CD8-positive, alpha-beta T cell (primary cell): ENCODE measurements at regions of chr3 and their contacts with region 1.

Region 1: DNA sequence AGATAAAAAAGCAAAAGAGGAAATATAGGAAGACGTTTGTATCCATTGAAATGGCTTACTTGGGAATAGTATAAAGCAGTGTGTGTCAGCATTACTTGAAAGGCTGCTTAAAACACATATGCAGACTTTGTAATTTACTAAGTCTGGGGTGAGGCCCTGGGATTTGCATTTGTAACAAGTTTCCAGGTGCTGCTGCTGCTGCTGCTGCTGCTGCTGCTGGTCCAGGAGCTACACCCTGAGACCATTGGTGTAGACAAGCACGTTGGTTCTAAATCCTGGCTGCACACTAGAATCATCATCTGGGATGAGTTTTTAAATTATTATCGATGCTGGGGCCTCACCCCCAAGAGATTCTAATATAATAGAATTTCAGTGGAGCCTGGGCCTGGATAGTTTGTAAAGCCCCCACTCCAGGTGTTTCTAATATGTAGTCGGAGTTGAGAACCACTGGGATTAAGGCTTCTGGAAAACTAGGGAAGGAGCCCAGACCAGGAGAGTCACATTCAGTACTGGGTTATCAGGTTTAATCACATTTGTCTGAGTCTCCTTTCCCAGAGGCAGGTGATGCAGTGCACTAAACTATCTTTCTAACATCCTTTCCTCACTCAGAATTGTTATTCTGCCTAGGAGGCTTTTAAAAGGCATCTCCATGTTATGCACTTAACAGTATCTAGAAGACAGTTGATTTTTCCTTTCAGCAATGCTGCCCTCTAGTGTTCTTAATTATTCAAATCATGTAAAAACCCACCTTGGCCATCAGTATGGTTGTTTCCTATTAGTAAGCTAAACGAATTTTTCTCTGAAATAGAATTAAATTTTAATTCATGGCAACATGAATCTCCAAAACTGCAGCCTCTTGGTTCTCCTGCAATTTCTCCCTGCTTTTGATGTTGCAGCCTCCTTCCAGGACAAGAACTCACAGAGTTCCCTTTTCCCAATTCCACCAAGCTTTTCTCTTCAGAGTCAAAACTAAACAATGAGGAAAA is 45.4 kb downstream of the SSR3 start:
- DNase-seq: peak in 2 of 9 experiments; percentile 61 to 72
- ATAC-seq: peak; percentile 86
- H3K4me3 ChIP-seq: no peak overlapping the region
- H3K4me3 Mint-ChIP-seq: no peak overlapping the region
- H3K27ac ChIP-seq: no peak overlapping the region
- H3K27ac Mint-ChIP-seq: no peak overlapping the region
- H3K4me1 ChIP-seq: no peaks in the 10 kb centered on the region
- H3K4me1 Mint-ChIP-seq: no peaks in the 10 kb centered on the region
- H3K27me3 ChIP-seq: no peaks in the 10 kb centered on the region
- H3K27me3 Mint-ChIP-seq: peaks cover 15% of the 10 kb centered on the region
- CTCF ChIP-seq: peak; percentile 69

Region 2: GRCh38 chr3:156040041-156040440 is 469.4 kb before region 1 on chr3:
- CTCF ChIA-PET with region 1: no interaction called
- POLR2A ChIA-PET with region 1: no interaction called
- intact Hi-C with region 1: loop called in 1 of 2 experiments (anchors 5 kb)
- DNase-seq: no peak
- ATAC-seq: no peak
- H3K4me3 ChIP-seq: no peak overlapping the region
- H3K4me3 Mint-ChIP-seq: no peak overlapping the region
- H3K27ac ChIP-seq: no peak overlapping the region
- H3K27ac Mint-ChIP-seq: no peak overlapping the region
- H3K4me1 ChIP-seq: no peaks in the 10 kb centered on the region
- H3K4me1 Mint-ChIP-seq: peaks cover 2% of the 10 kb centered on the region
- H3K27me3 ChIP-seq: no peaks in the 10 kb centered on the region
- H3K27me3 Mint-ChIP-seq: peaks cover 5% of the 10 kb centered on the region
- CTCF ChIP-seq: no peak

Region 3: GRCh38 chr3:156382458-156383346 is 126.8 kb before region 1 on chr3:
- CTCF ChIA-PET with region 1: interaction called, 4 read pairs
- POLR2A ChIA-PET with region 1: no interaction called
- intact Hi-C with region 1: loop called in 1 of 2 experiments (anchors 5 kb)
- DNase-seq: peak in 3 of 9 experiments; percentile 12 to 24 (median 13)
- ATAC-seq: no peak
- H3K4me3 ChIP-seq: no peak overlapping the region
- H3K4me3 Mint-ChIP-seq: no peak overlapping the region
- H3K27ac ChIP-seq: no peak overlapping the region
- H3K27ac Mint-ChIP-seq: no peak overlapping the region
- H3K4me1 ChIP-seq: no peaks in the 10 kb centered on the region
- H3K4me1 Mint-ChIP-seq: no peaks in the 10 kb centered on the region
- H3K27me3 ChIP-seq: no peaks in the 10 kb centered on the region
- H3K27me3 Mint-ChIP-seq: peaks cover 4% of the 10 kb centered on the region
- CTCF ChIP-seq: no peak

Region 4: GRCh38 chr3:156474560-156475389 is 34.7 kb before region 1 on chr3:
- CTCF ChIA-PET with region 1: interaction called, 62 read pairs
- POLR2A ChIA-PET with region 1: interaction called, 4 read pairs
- intact Hi-C with region 1: loop called (anchors 1 to 2 kb)
- DNase-seq: peak in 2 of 9 experiments; percentile 15 to 23
- ATAC-seq: no peak
- H3K4me3 ChIP-seq: no peak overlapping the region
- H3K4me3 Mint-ChIP-seq: peak overlapping the region; percentile 26
- H3K27ac ChIP-seq: no peak overlapping the region
- H3K27ac Mint-ChIP-seq: no peak overlapping the region
- H3K4me1 ChIP-seq: no peaks in the 10 kb centered on the region
- H3K4me1 Mint-ChIP-seq: peaks cover 3% of the 10 kb centered on the region
- H3K27me3 ChIP-seq: no peaks in the 10 kb centered on the region
- H3K27me3 Mint-ChIP-seq: peaks cover 7% of the 10 kb centered on the region
- CTCF ChIP-seq: peak; percentile 24

Region 5: GRCh38 chr3:156489462-156489911 is 20.0 kb before region 1 on chr3:
- CTCF ChIA-PET with region 1: interaction called, 62 read pairs
- POLR2A ChIA-PET with region 1: interaction called, 6 read pairs
- intact Hi-C with region 1: loop called in 1 of 2 experiments (anchors 2 kb)
- DNase-seq: no peak
- ATAC-seq: no peak
- H3K4me3 ChIP-seq: no peak overlapping the region
- H3K4me3 Mint-ChIP-seq: no peak overlapping the region
- H3K27ac ChIP-seq: no peak overlapping the region
- H3K27ac Mint-ChIP-seq: no peak overlapping the region
- H3K4me1 ChIP-seq: peaks cover 9% of the 10 kb centered on the region
- H3K4me1 Mint-ChIP-seq: peaks cover 12% of the 10 kb centered on the region
- H3K27me3 ChIP-seq: no peaks in the 10 kb centered on the region
- H3K27me3 Mint-ChIP-seq: peaks cover 5% of the 10 kb centered on the region
- CTCF ChIP-seq: no peak

Region 6: DNA sequence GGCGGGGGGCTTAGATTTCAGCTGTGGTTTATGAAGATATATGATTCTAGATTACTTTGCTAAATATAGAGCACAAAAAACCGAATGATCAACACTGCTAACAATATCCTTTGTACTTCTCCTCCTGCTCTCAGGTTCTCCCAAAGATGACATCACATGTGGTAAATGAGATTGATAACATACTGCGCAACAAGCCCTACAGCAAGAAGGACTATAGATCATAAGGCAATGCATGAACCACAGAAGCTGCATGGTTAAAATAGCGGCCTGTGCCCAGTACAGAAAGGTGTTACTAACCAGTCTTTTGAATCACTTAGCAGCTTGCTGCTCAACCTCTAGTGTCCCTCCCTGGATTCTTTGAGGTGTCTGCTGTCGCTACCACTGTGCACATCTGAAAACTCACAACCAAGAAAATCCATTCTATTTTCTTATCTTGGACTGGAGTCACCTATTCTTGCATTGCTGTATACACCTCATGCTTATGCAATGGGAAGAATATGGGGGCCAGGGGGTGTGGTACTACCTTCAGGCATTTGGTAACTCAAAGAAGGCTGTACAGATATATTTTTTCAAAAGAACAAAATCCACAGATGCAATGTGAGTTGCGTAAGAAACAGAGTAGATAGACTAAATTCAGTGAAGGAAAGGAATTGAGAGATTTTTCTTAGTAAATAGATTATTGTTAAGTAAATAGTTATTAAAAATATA is 27.2 kb after region 1 on chr3:
- CTCF ChIA-PET with region 1: interaction called, 7 read pairs
- POLR2A ChIA-PET with region 1: interaction called, 3 read pairs
- intact Hi-C with region 1: loop called in 1 of 2 experiments (anchors 1 kb)
- DNase-seq: no peak
- ATAC-seq: no peak
- H3K4me3 ChIP-seq: no peak overlapping the region
- H3K4me3 Mint-ChIP-seq: no peak overlapping the region
- H3K27ac ChIP-seq: no peak overlapping the region
- H3K27ac Mint-ChIP-seq: no peak overlapping the region
- H3K4me1 ChIP-seq: no peaks in the 10 kb centered on the region
- H3K4me1 Mint-ChIP-seq: no peaks in the 10 kb centered on the region
- H3K27me3 ChIP-seq: no peaks in the 10 kb centered on the region
- H3K27me3 Mint-ChIP-seq: no peaks in the 10 kb centered on the region
- CTCF ChIP-seq: no peak